Adrenal gland (tissue), 19 donors: ENCODE measurements at regions of chr3 and their contacts with region 1.

Region 1: GRCh38 chr3:36269274-36269673 is 111.0 kb upstream of the STAC start:
- DNase-seq: no peak
- H3K4me3 ChIP-seq: no peak overlapping the region
- H3K27ac ChIP-seq: no peak overlapping the region
- H3K4me1 ChIP-seq: no peaks in the 10 kb centered on the region
- H3K27me3 ChIP-seq: no peaks in the 10 kb centered on the region
- CTCF ChIP-seq: no peak
- POLR2A ChIP-seq: no peak

Region 2: DNA sequence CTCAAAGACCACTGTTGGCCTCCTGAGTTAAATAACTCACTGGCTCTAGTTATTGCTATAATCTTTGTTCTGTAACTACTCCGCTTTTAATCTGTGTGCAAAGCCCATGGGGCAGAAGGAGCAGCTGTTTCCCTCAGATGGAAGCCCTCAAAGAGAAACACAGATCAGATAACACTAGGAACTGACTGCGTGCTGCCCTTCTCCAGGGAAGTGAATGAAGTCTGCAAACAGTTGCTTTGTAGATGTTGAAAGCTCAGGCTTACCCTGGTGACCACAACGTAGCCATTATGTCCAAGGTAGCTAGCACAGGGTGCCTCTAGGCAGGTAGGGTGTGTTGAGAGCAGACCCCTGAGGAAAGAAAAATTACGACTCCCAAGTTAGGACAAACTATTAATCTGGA is 41.3 kb before region 1 on chr3:
- intact Hi-C with region 1: no loop called
- DNase-seq: no peak
- H3K4me3 ChIP-seq: no peak overlapping the region
- H3K27ac ChIP-seq: no peak overlapping the region
- H3K4me1 ChIP-seq: peaks cover 0 to 4% of the 10 kb centered on the region in 2 donors
- H3K27me3 ChIP-seq: peaks cover 9% of the 10 kb centered on the region
- CTCF ChIP-seq: no peak
- POLR2A ChIP-seq: no peak

Region 3: GRCh38 chr3:36540888-36541518 is 271.7 kb after region 1 on chr3:
- intact Hi-C with region 1: loop called in 1 of 2 experiments (anchors 10 kb)
- DNase-seq: peak in 6 of 7 donors; percentile 27 to 59 (median 34)
- H3K4me3 ChIP-seq: no peak overlapping the region
- H3K27ac ChIP-seq: no peak overlapping the region
- H3K4me1 ChIP-seq: no peaks in the 10 kb centered on the region
- H3K27me3 ChIP-seq: no peaks in the 10 kb centered on the region
- CTCF ChIP-seq: peak; percentile 73 to 88 (median 78)
- POLR2A ChIP-seq: no peak